ENCODE measurements at regions of chr16 and their contacts with region 1.

Region 1: DNA sequence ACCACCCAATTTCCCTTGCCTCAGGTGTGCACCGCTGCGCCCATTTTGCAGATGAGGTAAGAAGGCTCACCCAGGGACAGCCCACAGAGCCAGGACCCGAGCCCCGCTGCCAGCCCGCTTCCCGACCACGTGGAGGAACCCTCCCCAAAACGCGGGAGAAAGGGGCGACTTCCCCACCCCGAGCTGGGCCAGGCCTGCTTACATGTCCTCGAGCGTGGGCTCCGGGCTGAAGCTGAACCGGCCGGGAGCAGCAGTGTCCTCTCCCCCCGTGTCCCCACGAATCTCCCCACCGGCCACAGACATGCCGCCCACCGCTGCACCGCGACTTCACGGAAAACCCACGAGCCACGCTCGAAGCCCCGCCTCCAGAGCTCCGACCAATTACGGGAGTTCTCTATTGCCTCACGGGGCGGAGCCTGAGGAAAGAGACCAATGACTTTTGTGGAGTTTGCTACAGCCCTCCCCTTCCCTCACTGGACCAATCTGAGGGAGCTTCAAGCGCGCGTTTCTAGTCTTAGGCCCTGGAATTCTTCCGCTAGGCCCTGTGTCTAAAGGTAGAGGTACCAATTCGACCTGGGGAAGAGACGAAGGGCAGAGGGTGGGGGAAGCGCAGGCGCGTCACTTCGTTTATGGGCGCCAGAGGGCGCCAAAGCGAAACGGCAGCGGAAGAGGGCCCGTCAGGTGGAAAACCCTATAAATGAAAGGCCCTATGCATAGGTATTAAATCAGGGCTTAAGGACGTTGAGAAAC is at the start of gene DCTPP1:
- DNase-seq: peak; percentile 95 to 99 (median 98)
- H3K4me3 ChIP-seq: peak within 1 kb of the TSS; percentile 76 to 84
- H3K4me3 Mint-ChIP-seq: peak within 1 kb of the TSS in 1 of 8 donors; percentile 35
- H3K27ac ChIP-seq: peak within 1 kb of the TSS; percentile 72
- H3K27ac Mint-ChIP-seq: peak within 1 kb of the TSS in 2 of 7 donors; percentile 70 to 84
- H3K4me1 ChIP-seq: peaks cover 32% of the 10 kb centered on the region
- H3K4me1 Mint-ChIP-seq: peaks cover 17 to 28% (median 21%) of the 10 kb centered on the region in 4 donors
- H3K27me3 ChIP-seq: no peaks in the 10 kb centered on the region
- H3K27me3 Mint-ChIP-seq: no peaks in the 10 kb centered on the region
- total RNA-seq, gene DCTPP1: 15.0 to 18.0 TPM

Region 2: GRCh38 chr16:30183233-30184095 is 246.4 kb before region 1 on chr16 and contains the start of gene CORO1A:
- CTCF ChIA-PET with region 1: interaction called, 3 read pairs
- POLR2A ChIA-PET with region 1: interaction called, 10 read pairs
- intact Hi-C with region 1: no loop called
- DNase-seq: peak; percentile 80 to 87 (median 84)
- H3K4me3 ChIP-seq: peak within 1 kb of the TSS; percentile 91 to 93
- H3K4me3 Mint-ChIP-seq: peak within 1 kb of the TSS; percentile 94 to 99 (median 98)
- H3K27ac ChIP-seq: peak within 1 kb of the TSS; percentile 77
- H3K27ac Mint-ChIP-seq: peak within 1 kb of the TSS; percentile 96 to 99 (median 97)
- H3K4me1 ChIP-seq: peaks cover 40% of the 10 kb centered on the region
- H3K4me1 Mint-ChIP-seq: peaks cover 15 to 59% (median 29%) of the 10 kb centered on the region in 4 donors
- H3K27me3 ChIP-seq: no peaks in the 10 kb centered on the region
- H3K27me3 Mint-ChIP-seq: no peaks in the 10 kb centered on the region
- total RNA-seq, gene CORO1A: 745 to 769 TPM

Region 3: DNA sequence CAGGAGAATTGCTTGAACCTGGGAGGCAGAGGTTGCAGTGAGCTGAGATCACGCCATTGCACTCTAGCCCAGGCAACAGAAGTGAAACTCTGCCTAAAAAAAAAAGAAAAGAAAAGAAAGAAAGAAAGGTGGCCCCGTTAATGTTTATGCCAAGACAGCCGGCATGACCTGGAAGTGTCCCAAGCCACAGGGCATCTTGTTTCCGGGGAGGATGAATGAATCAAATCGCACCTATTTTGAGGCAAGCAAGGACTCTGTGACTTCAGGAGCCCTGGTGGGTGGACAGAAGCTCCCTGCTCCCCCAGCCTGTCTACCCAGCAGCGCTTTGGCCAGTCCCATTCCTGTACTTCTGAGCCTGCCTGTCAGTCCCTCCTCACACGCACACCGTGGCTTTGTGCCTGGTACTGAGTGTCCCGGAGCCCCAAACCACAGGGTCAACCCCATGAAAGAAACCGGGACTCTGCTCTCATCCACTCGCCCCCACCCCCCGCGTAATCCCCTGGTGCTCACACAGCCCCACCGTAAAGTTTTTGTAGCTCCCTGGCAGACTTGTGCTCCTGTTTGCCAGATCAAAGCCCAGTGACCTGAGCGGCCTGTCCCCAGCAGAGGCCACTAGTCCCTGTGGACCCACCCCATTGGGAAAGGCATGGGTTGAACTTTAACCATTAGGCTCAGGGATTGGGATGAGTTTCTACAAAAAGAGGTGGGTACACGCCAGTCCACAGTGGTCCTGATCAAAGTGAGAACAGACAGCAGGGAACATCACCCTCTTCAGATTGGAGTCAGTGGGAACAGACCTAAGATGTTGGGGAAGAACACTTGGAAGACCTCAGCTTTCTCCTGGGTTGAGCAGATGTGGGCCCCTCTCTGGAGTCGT is 94.0 kb before region 1 on chr16:
- CTCF ChIA-PET with region 1: no interaction called
- POLR2A ChIA-PET with region 1: no interaction called
- intact Hi-C with region 1: no loop called
- DNase-seq: peak in 1 of 5 donors; percentile 62
- H3K4me3 ChIP-seq: peak overlapping the region in 1 of 2 donors; percentile 47
- H3K4me3 Mint-ChIP-seq: peak overlapping the region; percentile 81 to 92 (median 86)
- H3K27ac ChIP-seq: peak overlapping the region; percentile 67
- H3K27ac Mint-ChIP-seq: peak overlapping the region; percentile 85 to 96 (median 90)
- H3K4me1 ChIP-seq: peaks cover 9% of the 10 kb centered on the region
- H3K4me1 Mint-ChIP-seq: peaks cover 8 to 31% (median 18%) of the 10 kb centered on the region in 4 donors
- H3K27me3 ChIP-seq: no peaks in the 10 kb centered on the region
- H3K27me3 Mint-ChIP-seq: no peaks in the 10 kb centered on the region

Region 4: DNA sequence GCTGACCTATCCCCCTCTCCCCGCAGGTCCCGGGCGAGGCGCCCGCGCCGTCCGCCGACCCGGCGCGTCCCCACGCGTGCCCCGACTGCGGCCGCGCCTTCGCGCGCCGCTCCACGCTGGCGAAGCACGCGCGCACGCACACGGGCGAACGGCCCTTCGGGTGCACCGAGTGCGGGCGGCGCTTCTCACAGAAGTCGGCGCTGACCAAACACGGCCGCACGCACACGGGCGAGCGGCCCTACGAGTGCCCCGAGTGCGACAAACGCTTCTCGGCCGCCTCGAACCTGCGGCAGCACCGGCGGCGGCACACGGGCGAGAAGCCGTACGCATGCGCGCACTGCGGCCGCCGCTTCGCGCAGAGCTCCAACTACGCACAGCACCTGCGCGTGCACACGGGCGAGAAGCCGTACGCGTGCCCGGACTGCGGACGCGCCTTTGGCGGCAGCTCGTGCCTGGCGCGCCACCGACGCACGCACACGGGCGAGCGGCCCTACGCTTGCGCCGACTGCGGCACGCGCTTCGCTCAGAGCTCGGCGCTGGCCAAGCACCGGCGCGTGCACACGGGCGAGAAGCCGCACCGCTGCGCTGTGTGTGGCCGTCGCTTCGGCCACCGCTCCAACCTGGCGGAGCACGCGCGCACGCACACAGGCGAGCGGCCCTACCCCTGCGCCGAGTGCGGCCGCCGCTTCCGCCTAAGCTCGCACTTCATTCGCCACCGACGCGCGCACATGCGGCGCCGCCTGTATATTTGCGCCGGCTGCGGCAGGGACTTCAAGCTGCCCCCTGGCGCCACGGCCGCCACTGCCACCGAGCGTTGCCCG is 12.1 kb before region 1 on chr16:
- CTCF ChIA-PET with region 1: interaction called, 34 read pairs
- POLR2A ChIA-PET with region 1: interaction called, 91 read pairs
- intact Hi-C with region 1: loop called (anchors 1 kb)
- DNase-seq: peak; percentile 89 to 93 (median 91)
- H3K4me3 ChIP-seq: peak overlapping the region; percentile 12 to 68
- H3K4me3 Mint-ChIP-seq: peak overlapping the region; percentile 39 to 85 (median 68)
- H3K27ac ChIP-seq: peak overlapping the region; percentile 61
- H3K27ac Mint-ChIP-seq: peak overlapping the region in 3 of 7 donors; percentile 41 to 90 (median 74)
- H3K4me1 ChIP-seq: peaks cover 15% of the 10 kb centered on the region
- H3K4me1 Mint-ChIP-seq: peaks cover 6 to 24% (median 13%) of the 10 kb centered on the region in 4 donors
- H3K27me3 ChIP-seq: no peaks in the 10 kb centered on the region
- H3K27me3 Mint-ChIP-seq: no peaks in the 10 kb centered on the region

Region 5: DNA sequence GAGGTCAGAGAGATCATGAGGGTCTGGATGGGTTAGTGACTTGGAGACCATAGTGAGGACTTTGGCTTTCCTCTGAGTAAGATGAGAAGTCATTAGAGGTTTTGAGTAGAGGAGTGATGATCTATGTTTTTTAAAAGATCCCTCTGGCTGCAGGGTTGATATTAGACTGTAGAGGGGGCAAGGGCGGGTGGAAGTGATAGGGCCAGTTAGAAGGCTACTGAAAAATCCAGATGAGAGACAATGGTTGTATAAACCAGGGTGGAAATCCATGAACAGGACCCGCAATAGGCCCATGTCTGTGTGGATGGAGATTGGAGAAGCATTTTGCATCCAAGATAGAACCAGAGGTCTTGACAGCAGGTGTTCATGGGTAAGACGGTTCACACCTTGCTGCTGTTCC is 52.5 kb after region 1 on chr16:
- CTCF ChIA-PET with region 1: interaction called, 9 read pairs
- POLR2A ChIA-PET with region 1: interaction called, 1,162 read pairs
- intact Hi-C with region 1: no loop called
- DNase-seq: peak in 1 of 5 donors; percentile 15
- H3K4me3 ChIP-seq: no peak overlapping the region
- H3K4me3 Mint-ChIP-seq: peak overlapping the region in 6 of 8 donors; percentile 15 to 43 (median 26)
- H3K27ac ChIP-seq: no peak overlapping the region
- H3K27ac Mint-ChIP-seq: peak overlapping the region; percentile 35 to 93 (median 84)
- H3K4me1 ChIP-seq: peaks cover 56% of the 10 kb centered on the region
- H3K4me1 Mint-ChIP-seq: peaks cover 33 to 66% (median 38%) of the 10 kb centered on the region in 4 donors
- H3K27me3 ChIP-seq: no peaks in the 10 kb centered on the region
- H3K27me3 Mint-ChIP-seq: no peaks in the 10 kb centered on the region

Region 6: DNA sequence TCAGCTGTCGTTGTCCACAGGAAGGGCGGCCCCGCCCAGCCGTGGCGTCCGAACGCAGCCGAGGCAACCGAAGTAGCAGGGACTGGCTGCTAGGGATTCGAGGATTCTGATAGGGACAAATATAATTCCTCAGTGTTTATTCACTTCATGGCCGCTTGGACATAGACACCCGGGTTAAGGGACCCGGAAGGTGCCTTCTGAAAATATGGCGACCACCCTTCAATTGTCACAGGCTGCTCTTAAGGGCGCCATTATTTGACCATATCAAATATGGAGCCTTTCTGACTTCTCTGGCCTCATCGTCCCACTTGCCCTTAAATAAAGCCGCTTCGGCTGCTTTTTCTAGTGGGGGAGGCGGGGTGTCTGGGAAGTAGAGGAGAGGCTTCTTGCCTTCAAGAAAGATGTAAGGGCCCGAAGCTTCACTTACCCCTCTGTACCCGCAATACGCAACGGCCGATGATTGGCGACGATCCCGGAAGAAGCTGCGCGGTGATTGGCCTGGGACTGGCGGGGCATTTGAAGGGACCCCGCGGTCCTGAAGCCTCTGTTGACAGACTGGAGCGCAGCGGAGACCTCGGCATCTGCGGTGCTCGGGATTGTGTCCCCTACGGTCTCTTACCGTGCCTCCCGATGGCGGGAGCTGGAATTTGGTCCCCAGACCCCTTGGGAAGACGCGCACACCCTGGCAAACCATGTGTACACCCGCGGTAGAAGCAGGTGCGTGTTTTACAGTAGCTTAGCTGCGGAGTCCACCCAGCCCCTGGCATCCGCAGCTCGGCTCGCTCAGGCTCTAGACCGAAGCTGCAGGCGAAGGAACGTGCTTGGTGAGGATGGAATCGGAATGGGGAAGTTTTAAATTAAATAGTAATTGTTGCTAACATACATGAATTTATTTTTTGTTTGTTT is 142.1 kb after region 1 on chr16 and contains the start of gene ZNF688:
- CTCF ChIA-PET with region 1: interaction called, 8 read pairs
- POLR2A ChIA-PET with region 1: interaction called, 21 read pairs
- intact Hi-C with region 1: loop called (anchors 1 kb)
- DNase-seq: peak; percentile 94 to 100 (median 97)
- H3K4me3 ChIP-seq: peak within 1 kb of the TSS; percentile 65 to 71
- H3K4me3 Mint-ChIP-seq: peak within 1 kb of the TSS; percentile 86 to 96 (median 91)
- H3K27ac ChIP-seq: peak within 1 kb of the TSS; percentile 90
- H3K27ac Mint-ChIP-seq: peak within 1 kb of the TSS; percentile 96 to 97 (median 97)
- H3K4me1 ChIP-seq: peaks cover 50% of the 10 kb centered on the region
- H3K4me1 Mint-ChIP-seq: peaks cover 22 to 51% (median 36%) of the 10 kb centered on the region in 4 donors
- H3K27me3 ChIP-seq: no peaks in the 10 kb centered on the region
- H3K27me3 Mint-ChIP-seq: no peaks in the 10 kb centered on the region
- total RNA-seq, gene ZNF688: 21.4 to 22.7 TPM

Region 7: GRCh38 chr16:30628627-30629540 is 199.0 kb after region 1 on chr16:
- CTCF ChIA-PET with region 1: interaction called, 18 read pairs
- POLR2A ChIA-PET with region 1: interaction called, 4 read pairs
- intact Hi-C with region 1: loop called (anchors 1 kb)
- DNase-seq: peak; percentile 72 to 83 (median 80)
- H3K4me3 ChIP-seq: peak overlapping the region in 1 of 2 donors; percentile 48
- H3K4me3 Mint-ChIP-seq: peak overlapping the region; percentile 67 to 86 (median 78)
- H3K27ac ChIP-seq: no peak overlapping the region
- H3K27ac Mint-ChIP-seq: peak overlapping the region; percentile 38 to 95 (median 87)
- H3K4me1 ChIP-seq: peaks cover 9% of the 10 kb centered on the region
- H3K4me1 Mint-ChIP-seq: peaks cover 4 to 9% (median 7%) of the 10 kb centered on the region in 4 donors
- H3K27me3 ChIP-seq: no peaks in the 10 kb centered on the region
- H3K27me3 Mint-ChIP-seq: peaks cover 0 to under 1% of the 10 kb centered on the region in 2 donors

Measured in CD4-positive, alpha-beta memory T cell (primary cell).